CD4-positive, alpha-beta T cell (primary cell): ENCODE measurements at regions of chr9 and their contacts with region 1.

Region 1: GRCh38 chr9:37465249-37466036 is at the start of gene ZBTB5:
- DNase-seq: peak; percentile 97 to 100 (median 98)
- ATAC-seq: peak; percentile 80
- H3K4me3 ChIP-seq: peak within 1 kb of the TSS; percentile 96
- H3K4me3 Mint-ChIP-seq: peak within 1 kb of the TSS; percentile 91
- H3K27ac ChIP-seq: peak within 1 kb of the TSS; percentile 90 to 95
- H3K27ac Mint-ChIP-seq: peak within 1 kb of the TSS; percentile 92
- H3K4me1 ChIP-seq: peaks cover 31% of the 10 kb centered on the region
- H3K4me1 Mint-ChIP-seq: peaks cover 40% of the 10 kb centered on the region
- H3K27me3 ChIP-seq: no peaks in the 10 kb centered on the region
- H3K27me3 Mint-ChIP-seq: no peaks in the 10 kb centered on the region
- CTCF ChIP-seq: no peak
- total RNA-seq, gene ZBTB5: 21.3 to 22.0 TPM

Region 2: DNA sequence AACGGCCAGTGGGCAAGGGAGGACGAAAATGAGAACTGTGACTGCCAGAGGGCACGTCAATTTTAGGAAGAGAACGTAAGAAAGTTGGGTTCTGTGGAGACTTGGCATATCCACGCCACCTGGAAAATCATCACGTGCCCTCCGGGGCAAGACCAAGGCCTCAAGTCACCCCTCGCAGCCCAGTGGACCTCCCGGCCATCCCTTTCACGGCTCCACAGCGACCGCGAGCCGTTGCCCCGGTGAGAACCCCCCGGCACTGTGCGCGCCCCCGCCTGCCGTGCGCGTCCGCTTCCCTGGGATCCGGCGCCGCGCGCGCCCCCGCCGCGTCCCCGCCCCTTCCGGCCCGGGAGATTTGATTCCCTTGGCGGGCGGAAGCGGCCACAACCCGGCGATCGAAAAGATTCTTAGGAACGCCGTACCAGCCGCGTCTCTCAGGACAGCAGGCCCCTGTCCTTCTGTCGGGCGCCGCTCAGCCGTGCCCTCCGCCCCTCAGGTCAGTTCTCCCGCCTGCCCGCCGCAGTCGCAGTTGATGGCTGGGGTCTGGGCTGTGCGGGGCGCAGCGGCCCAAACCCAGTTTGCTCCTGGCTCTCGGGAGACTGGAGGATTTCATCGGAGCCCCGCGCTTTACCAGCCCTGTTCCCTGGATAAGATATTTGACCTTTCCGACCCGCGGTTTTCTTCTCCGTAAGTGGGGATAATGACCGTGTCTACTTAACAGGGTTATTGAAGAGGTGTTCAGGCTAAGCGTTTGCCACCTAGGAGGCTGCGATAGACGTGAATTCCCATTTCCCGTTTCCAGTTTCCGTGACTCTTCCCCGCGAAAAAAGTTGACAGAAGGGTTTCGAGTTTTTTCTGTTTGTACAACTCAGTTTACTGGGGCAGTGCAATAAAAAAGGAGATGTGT is 892.7 kb before region 1 on chr9 and contains the start of gene MELK:
- CTCF ChIA-PET with region 1: no interaction called
- POLR2A ChIA-PET with region 1: no interaction called
- intact Hi-C with region 1: loop called in 1 of 2 experiments (anchors 10 kb)
- DNase-seq: peak; percentile 67 to 89 (median 80)
- ATAC-seq: peak; percentile 79
- H3K4me3 ChIP-seq: peak within 1 kb of the TSS; percentile 92
- H3K4me3 Mint-ChIP-seq: peak within 1 kb of the TSS; percentile 92
- H3K27ac ChIP-seq: peak within 1 kb of the TSS; percentile 46 to 69
- H3K27ac Mint-ChIP-seq: peak within 1 kb of the TSS; percentile 68
- H3K4me1 ChIP-seq: peaks cover 19% of the 10 kb centered on the region
- H3K4me1 Mint-ChIP-seq: peaks cover 25% of the 10 kb centered on the region
- H3K27me3 ChIP-seq: no peaks in the 10 kb centered on the region
- H3K27me3 Mint-ChIP-seq: no peaks in the 10 kb centered on the region
- CTCF ChIP-seq: no peak
- total RNA-seq, gene MELK: 0.42 to 0.47 TPM

Region 3: GRCh38 chr9:37119907-37120842 is 345.3 kb before region 1 on chr9 and contains the start of gene ZCCHC7:
- CTCF ChIA-PET with region 1: no interaction called
- POLR2A ChIA-PET with region 1: interaction called, 22 read pairs
- intact Hi-C with region 1: loop called in 1 of 2 experiments (anchors 10 kb)
- DNase-seq: peak; percentile 95 to 98 (median 97)
- ATAC-seq: peak; percentile 95
- H3K4me3 ChIP-seq: peak within 1 kb of the TSS; percentile 79
- H3K4me3 Mint-ChIP-seq: peak within 1 kb of the TSS; percentile 95
- H3K27ac ChIP-seq: peak within 1 kb of the TSS; percentile 87 to 94
- H3K27ac Mint-ChIP-seq: peak within 1 kb of the TSS; percentile 92
- H3K4me1 ChIP-seq: peaks cover 21% of the 10 kb centered on the region
- H3K4me1 Mint-ChIP-seq: peaks cover 42% of the 10 kb centered on the region
- H3K27me3 ChIP-seq: no peaks in the 10 kb centered on the region
- H3K27me3 Mint-ChIP-seq: no peaks in the 10 kb centered on the region
- CTCF ChIP-seq: no peak
- total RNA-seq, gene ZCCHC7: 40.7 to 41.0 TPM

Region 4: DNA sequence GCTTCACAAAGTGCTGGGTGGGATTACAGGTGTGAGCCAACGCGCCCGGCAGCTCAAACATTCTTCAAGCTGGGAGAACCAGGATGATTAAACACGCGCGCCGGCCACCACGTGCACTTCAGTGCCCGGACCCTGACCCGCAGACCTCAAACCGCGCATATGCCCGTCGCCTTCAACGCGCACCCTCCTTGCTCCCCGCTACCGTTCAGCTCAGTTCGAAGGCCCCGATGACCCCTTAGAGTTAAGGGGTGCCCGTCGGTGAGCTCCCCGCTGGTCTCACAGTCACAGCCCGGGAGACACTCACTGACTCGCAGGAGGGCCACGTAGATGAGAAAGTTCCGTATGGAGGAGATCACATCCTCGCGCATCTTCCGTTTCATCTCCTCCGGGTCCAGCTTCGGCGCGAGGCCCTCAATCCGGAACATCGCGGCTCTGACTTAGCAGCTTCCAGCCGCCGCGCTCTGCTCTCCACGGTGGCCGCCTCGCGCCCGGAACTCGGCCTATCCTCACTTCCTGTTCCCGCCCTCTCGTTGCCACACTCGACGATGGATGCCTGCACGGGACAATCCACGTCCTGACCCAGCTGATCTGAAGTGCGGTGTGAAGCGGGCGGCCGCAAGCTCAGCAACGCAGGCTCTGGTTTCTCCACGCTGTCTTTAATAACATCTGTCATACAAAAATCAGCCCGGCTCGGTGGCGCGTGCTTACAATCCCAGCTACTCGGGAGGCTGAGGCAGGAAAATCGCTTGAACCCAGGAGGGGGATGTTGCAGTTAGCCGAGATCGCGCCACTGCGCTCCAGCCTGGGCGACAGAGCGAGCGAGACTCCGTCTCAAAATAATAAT is 126.9 kb after region 1 on chr9 and contains the start of gene TOMM5:
- CTCF ChIA-PET with region 1: no interaction called
- POLR2A ChIA-PET with region 1: interaction called, 7 read pairs
- intact Hi-C with region 1: loop called (anchors 5 kb)
- DNase-seq: peak; percentile 83 to 95 (median 86)
- ATAC-seq: peak; percentile 94
- H3K4me3 ChIP-seq: peak within 1 kb of the TSS; percentile 100
- H3K4me3 Mint-ChIP-seq: peak within 1 kb of the TSS; percentile 99
- H3K27ac ChIP-seq: peak within 1 kb of the TSS in 1 of 2 donors; percentile 64
- H3K27ac Mint-ChIP-seq: peak within 1 kb of the TSS; percentile 92
- H3K4me1 ChIP-seq: peaks cover 33% of the 10 kb centered on the region
- H3K4me1 Mint-ChIP-seq: peaks cover 50% of the 10 kb centered on the region
- H3K27me3 ChIP-seq: peaks cover 7% of the 10 kb centered on the region in 2 experiments
- H3K27me3 Mint-ChIP-seq: peaks cover 12% of the 10 kb centered on the region
- CTCF ChIP-seq: no peak
- total RNA-seq, gene TOMM5: 31.4 to 35.3 TPM